Endothelial cell of umbilical vein (primary cell): ENCODE measurements at regions of chr22 and their contacts with region 1.

Region 1: DNA sequence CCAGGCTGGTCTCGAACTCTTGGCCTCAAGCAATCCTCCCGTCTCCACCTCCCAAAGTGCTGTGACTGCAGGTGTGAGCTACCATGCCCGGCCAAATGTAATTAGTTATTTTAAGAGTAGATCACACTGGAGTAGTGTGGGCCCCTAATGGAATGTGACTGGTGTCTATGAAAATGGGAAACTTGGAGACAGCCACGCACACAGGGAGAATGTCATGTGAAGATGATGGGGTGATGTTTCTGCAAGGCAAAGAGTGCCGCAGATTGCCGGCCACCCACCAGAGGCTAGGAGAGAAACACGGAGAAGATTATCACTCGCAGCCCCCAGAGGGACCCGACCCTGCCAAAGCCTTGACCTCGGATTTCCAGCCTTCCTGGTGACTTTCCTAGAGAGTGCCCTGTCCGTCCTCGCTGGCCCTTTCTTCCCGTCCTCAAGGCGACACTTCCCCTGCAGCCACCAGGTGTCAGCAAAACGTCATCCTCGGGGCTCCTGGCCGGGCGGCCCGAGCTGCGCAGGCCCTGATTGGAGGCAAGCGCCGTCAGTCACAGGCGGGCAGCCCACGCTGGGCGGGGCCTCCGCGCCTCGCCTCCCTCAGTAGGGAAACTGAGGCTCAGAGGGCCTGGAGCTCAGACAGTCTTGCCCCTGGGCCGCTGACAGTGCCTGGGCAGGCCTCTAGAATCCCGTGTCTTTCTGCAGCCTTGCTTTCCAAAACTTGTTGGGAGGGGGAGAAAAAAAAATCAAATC is 16.3 kb downstream of the CRYBB2 start:
- DNase-seq: peak; percentile 73
- H3K4me3 ChIP-seq: no peak overlapping the region
- H3K27ac ChIP-seq: no peak overlapping the region
- H3K4me1 ChIP-seq: peaks cover 3% of the 10 kb centered on the region
- H3K27me3 ChIP-seq: peaks cover 0 to 3% of the 10 kb centered on the region in 2 experiments
- CTCF ChIP-seq: peak; percentile 70 to 77
- POLR2A ChIP-seq: no peak

Region 2: GRCh38 chr22:25110846-25111578 is 124.7 kb before region 1 on chr22:
- CTCF ChIA-PET with region 1: no interaction called
- POLR2A ChIA-PET with region 1: no interaction called
- dilution Hi-C with region 1: no loop called
- intact Hi-C with region 1: no loop called
- DNase-seq: peak; percentile 96
- H3K4me3 ChIP-seq: peak overlapping the region in 2 of 3 experiments; percentile 27 to 61
- H3K27ac ChIP-seq: peak overlapping the region; percentile 83
- H3K4me1 ChIP-seq: peaks cover 42% of the 10 kb centered on the region
- H3K27me3 ChIP-seq: no peaks in the 10 kb centered on the region
- CTCF ChIP-seq: peak; percentile 45 to 77
- POLR2A ChIP-seq: no peak

Region 3: DNA sequence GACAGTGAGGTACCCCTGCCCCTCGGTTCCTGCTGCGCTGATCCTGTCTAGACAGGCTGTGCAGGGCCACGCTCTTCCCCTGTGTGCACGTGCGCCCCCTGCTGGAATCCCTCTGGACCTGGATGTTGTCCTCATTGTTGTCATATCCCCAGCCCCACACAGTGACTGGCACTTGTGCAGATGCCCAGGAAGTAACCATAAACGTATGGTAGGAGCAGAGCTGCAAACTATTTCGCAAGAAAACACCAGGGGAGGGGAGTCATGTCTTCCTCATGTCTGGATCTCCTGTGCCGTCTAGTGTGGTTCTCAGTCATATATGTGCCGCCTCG is 98.4 kb after region 1 on chr22:
- CTCF ChIA-PET with region 1: interaction called, 13 read pairs
- POLR2A ChIA-PET with region 1: no interaction called
- dilution Hi-C with region 1: no loop called
- intact Hi-C with region 1: loop called (anchors 2 kb)
- DNase-seq: peak; percentile 44
- H3K4me3 ChIP-seq: no peak overlapping the region
- H3K27ac ChIP-seq: no peak overlapping the region
- H3K4me1 ChIP-seq: no peaks in the 10 kb centered on the region
- H3K27me3 ChIP-seq: peaks cover 0 to 2% of the 10 kb centered on the region in 2 experiments
- CTCF ChIP-seq: peak; percentile 68 to 75
- POLR2A ChIP-seq: no peak

Region 4: DNA sequence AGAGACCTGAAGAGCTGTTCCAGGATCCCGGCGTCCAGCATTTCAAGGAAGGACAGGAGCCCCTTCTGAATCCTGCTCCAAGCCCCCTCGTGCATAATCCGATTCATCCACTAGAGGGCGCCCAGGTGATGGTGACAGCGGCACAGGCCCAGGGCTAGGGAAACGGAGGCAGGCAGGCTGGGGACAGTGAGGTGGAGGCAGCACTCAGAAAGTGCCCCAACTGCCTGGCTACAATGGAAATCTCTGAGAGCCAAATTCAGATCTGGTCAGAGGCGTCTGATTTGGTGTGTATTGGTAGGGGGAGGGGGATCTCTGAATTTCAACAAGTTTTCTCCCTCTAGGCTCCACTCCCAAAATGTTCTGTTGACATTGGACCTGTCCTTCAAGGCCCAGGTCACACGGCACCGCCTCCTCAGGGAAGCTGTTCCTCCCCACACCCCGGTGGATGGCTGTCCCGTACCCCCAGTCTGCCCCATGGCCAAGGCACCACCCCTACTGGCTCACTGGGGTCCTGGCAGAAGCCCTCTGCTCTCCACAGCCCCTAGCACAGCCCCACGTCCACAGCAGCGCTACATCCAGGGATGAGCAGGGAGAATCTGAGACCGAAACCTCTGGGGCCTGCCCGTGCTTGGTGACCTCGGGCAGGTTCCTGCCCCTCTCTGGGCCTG is 126.6 kb after region 1 on chr22:
- CTCF ChIA-PET with region 1: no interaction called
- POLR2A ChIA-PET with region 1: no interaction called
- dilution Hi-C with region 1: no loop called
- intact Hi-C with region 1: no loop called
- DNase-seq: peak; percentile 54
- H3K4me3 ChIP-seq: no peak overlapping the region
- H3K27ac ChIP-seq: no peak overlapping the region
- H3K4me1 ChIP-seq: peaks cover 10% of the 10 kb centered on the region
- H3K27me3 ChIP-seq: no peaks in the 10 kb centered on the region
- CTCF ChIP-seq: peak; percentile 87
- POLR2A ChIP-seq: no peak

Region 5: DNA sequence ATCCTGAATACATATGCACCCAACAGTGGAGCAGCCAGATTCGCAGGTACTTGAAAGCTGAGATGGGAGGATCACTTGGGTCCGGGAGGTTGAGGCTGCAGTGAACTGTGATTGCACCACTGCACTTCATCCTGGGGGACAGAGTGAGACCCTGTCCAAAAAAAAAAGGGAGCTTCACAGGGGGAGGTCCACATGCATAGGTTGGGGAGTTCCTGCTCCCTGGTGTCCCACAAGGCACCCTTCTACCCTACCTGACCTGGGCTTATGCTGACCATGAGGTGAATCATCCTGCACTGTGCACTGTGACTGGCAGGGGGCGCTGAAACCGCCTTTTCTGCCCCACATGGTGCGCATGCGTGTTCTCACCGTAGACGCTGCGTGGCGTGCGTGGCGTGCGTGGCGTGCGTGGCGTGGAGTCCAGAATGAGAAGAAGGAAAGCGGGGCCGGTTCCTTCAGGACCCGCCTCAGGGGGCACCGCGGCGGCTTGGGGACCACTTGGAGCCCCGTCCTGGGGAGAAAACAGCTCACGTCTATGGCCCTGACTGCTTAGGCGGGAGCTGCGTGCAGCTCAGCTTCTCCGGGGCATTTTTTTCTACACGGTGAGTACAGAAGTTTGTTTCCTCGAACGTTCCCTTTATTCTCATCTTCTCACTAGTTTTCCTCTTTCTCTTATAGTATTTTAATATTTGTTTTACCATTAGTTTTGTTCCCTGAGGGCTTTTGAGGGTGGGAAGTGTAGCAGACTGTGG is 212.1 kb after region 1 on chr22:
- CTCF ChIA-PET with region 1: no interaction called
- POLR2A ChIA-PET with region 1: no interaction called
- dilution Hi-C with region 1: no loop called
- intact Hi-C with region 1: loop called (anchors 5 kb)
- DNase-seq: peak; percentile 92
- H3K4me3 ChIP-seq: peak overlapping the region; percentile 77 to 97 (median 95)
- H3K27ac ChIP-seq: peak overlapping the region; percentile 62
- H3K4me1 ChIP-seq: peaks cover 17% of the 10 kb centered on the region
- H3K27me3 ChIP-seq: no peaks in the 10 kb centered on the region
- CTCF ChIP-seq: peak; percentile 92 to 93
- POLR2A ChIP-seq: peak; percentile 78

Region 6: DNA sequence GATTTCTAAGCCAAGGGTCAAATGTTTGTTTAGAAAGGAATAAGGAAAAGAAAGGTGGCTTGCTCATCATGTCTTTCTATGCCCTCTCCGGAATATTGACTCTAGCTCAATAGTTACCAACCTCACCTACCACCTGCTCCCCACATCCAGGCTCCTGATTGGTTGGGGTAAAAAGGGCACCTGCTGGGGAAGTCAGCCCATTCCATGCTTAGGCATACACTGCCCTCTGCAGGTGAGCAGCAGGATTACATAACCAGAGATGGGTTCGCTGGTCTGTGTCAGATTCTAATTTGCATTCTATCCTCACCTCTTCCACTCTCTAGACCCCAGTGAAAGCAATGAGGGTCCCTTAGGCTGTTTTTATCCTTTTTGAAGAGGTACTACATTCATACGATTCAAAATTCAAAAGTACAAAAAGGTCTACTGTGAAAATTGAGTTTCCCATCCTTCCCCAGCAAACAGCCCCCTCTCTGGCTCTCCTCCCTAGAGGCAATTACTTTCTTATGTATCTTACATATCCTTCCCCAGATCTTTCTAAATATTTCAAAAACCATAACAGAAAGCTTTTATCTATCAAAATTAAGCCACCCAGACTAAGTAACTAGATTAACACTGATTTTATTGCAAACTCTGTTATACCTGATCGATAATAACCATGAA is 1095.4 kb after region 1 on chr22:
- CTCF ChIA-PET with region 1: no interaction called
- POLR2A ChIA-PET with region 1: no interaction called
- dilution Hi-C with region 1: no loop called
- intact Hi-C with region 1: loop called (anchors 5 kb)
- DNase-seq: peak; percentile 37
- H3K4me3 ChIP-seq: no peak overlapping the region
- H3K27ac ChIP-seq: no peak overlapping the region
- H3K4me1 ChIP-seq: no peaks in the 10 kb centered on the region
- H3K27me3 ChIP-seq: peaks cover 0 to 2% of the 10 kb centered on the region in 2 experiments
- CTCF ChIP-seq: peak; percentile 82 to 84
- POLR2A ChIP-seq: no peak